CD8-positive, alpha-beta memory T cell (primary cell): ENCODE measurements at regions of chr9 and their contacts with region 1.

Region 1: DNA sequence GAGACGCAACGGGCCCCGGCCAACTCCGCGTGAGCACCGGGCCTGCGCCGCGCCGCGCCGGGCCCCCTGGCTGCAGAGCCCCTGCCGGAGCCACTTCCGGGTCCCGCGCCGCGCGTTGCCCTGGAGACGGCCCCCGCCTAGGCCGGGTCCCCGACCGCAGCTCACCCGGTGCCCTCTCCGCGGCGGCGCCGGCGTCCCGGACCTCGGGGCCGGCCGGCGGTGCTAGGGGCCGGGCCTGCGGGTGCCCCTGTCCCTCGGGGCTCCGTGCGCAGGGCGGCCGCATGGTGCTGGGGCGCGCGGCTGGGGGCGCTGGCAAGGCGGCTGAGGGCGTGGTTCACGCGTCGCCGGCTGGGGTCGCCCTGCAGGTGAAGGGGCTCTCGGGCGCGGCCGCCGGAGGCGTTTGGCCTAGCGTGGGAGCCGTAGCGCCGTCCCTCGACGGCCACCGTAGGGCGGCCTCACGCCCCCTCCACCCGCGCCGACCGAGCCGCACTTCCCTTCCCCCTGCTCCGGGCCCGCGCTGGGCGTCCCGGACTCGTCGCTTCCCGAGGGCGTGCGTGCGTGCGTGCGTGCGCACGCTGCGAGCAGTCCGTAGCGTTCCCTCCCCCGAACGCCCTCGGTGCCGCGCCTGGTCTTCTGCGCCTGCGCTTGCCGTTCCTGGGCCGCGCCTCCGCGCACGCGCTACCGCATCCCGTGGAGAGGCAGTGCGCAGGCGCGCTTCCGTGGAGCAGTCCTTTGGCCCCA is at the start of gene TMEM250:
- DNase-seq: peak; percentile 93 to 97 (median 97)
- H3K4me3 ChIP-seq: peak within 1 kb of the TSS; percentile 66
- H3K4me3 Mint-ChIP-seq: peak within 1 kb of the TSS; percentile 83 to 92 (median 85)
- H3K27ac ChIP-seq: peak within 1 kb of the TSS; percentile 67
- H3K27ac Mint-ChIP-seq: peak within 1 kb of the TSS; percentile 78 to 89 (median 84)
- H3K4me1 ChIP-seq: peaks cover 35% of the 10 kb centered on the region
- H3K4me1 Mint-ChIP-seq: peaks cover 5 to 37% (median 8%) of the 10 kb centered on the region in 3 donors
- H3K27me3 ChIP-seq: no peaks in the 10 kb centered on the region
- H3K27me3 Mint-ChIP-seq: no peaks in the 10 kb centered on the region
- total RNA-seq, gene TMEM250: 46.4 to 50.2 TPM

Region 2: GRCh38 chr9:135969064-135969683 is 149.3 kb before region 1 on chr9:
- CTCF ChIA-PET with region 1: interaction called, 86 read pairs
- POLR2A ChIA-PET with region 1: interaction called, 3 read pairs
- DNase-seq: no peak
- H3K4me3 ChIP-seq: no peak overlapping the region
- H3K4me3 Mint-ChIP-seq: no peak overlapping the region
- H3K27ac ChIP-seq: no peak overlapping the region
- H3K27ac Mint-ChIP-seq: peak overlapping the region in 1 of 8 donors; percentile 46
- H3K4me1 ChIP-seq: peaks cover 9% of the 10 kb centered on the region
- H3K4me1 Mint-ChIP-seq: peaks cover 6 to 7% (median 7%) of the 10 kb centered on the region in 3 donors
- H3K27me3 ChIP-seq: no peaks in the 10 kb centered on the region
- H3K27me3 Mint-ChIP-seq: peaks cover 6 to 7% of the 10 kb centered on the region in 2 donors

Region 3: DNA sequence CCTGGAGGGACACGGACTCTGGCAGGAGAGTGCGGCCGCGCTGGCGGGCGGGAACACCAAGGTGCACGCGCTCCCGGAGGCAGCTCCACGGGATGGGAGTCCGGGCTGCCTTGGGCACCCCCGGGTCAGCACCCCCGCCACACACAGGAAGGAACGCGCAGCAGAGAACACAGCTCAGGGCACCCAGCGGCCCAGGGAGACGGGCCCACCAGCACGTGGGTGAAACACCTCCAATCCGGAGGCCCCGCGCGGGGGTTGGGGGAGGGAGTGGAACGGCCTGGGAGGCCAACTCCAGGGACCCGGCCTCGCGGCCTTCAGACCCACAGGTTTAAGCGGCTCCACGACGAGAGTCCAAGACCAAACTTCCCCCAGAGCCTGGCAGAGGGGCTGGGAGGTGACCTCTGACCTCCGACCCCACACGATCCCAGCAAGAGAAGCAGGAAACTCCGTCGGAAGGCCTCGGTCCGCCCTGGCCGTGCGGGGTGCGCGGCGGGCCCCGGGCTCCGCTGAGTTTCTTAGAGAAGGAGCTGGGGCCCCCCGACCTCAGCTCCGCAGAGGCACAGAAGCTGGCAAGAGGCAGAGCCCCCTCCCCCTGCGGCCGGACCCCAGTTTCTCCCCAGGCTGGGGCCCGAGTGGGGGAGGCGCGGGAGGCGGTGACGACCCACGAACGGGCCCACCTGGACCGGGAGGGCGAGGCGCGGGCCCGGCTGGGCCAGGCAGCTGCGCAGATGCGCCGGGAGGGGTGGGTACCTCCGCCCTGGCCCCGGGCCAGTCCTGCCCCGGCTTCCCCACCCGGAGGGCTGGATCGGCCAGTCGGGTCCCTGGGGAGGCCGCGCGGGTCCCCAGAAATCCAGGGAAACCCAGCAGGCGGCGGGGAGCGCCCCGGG is 24.3 kb before region 1 on chr9:
- CTCF ChIA-PET with region 1: interaction called, 81 read pairs
- POLR2A ChIA-PET with region 1: interaction called, 7 read pairs
- DNase-seq: peak; percentile 39 to 72 (median 57)
- H3K4me3 ChIP-seq: peak overlapping the region; percentile 50
- H3K4me3 Mint-ChIP-seq: peak overlapping the region; percentile 64 to 94 (median 77)
- H3K27ac ChIP-seq: peak overlapping the region; percentile 47
- H3K27ac Mint-ChIP-seq: peak overlapping the region in 6 of 8 donors; percentile 42 to 85 (median 57)
- H3K4me1 ChIP-seq: peaks cover 28% of the 10 kb centered on the region
- H3K4me1 Mint-ChIP-seq: peaks cover 20 to 49% (median 22%) of the 10 kb centered on the region in 3 donors
- H3K27me3 ChIP-seq: no peaks in the 10 kb centered on the region
- H3K27me3 Mint-ChIP-seq: peaks cover 0 to 2% of the 10 kb centered on the region in 2 donors

Region 4: GRCh38 chr9:136133191-136133958 is 14.9 kb after region 1 on chr9:
- CTCF ChIA-PET with region 1: no interaction called
- POLR2A ChIA-PET with region 1: no interaction called
- DNase-seq: peak in 1 of 5 donors; percentile 23
- H3K4me3 ChIP-seq: no peak overlapping the region
- H3K4me3 Mint-ChIP-seq: peak overlapping the region in 6 of 7 donors; percentile 47 to 64 (median 55)
- H3K27ac ChIP-seq: no peak overlapping the region
- H3K27ac Mint-ChIP-seq: no peak overlapping the region
- H3K4me1 ChIP-seq: no peaks in the 10 kb centered on the region
- H3K4me1 Mint-ChIP-seq: peaks cover 0 to 13% (median 4%) of the 10 kb centered on the region in 3 donors
- H3K27me3 ChIP-seq: peaks cover 7% of the 10 kb centered on the region
- H3K27me3 Mint-ChIP-seq: peaks cover 26 to 39% of the 10 kb centered on the region in 2 donors